Tibial artery (tissue), 4 donors: ENCODE measurements at regions of chr10 and their contacts with region 1.

Region 1: DNA sequence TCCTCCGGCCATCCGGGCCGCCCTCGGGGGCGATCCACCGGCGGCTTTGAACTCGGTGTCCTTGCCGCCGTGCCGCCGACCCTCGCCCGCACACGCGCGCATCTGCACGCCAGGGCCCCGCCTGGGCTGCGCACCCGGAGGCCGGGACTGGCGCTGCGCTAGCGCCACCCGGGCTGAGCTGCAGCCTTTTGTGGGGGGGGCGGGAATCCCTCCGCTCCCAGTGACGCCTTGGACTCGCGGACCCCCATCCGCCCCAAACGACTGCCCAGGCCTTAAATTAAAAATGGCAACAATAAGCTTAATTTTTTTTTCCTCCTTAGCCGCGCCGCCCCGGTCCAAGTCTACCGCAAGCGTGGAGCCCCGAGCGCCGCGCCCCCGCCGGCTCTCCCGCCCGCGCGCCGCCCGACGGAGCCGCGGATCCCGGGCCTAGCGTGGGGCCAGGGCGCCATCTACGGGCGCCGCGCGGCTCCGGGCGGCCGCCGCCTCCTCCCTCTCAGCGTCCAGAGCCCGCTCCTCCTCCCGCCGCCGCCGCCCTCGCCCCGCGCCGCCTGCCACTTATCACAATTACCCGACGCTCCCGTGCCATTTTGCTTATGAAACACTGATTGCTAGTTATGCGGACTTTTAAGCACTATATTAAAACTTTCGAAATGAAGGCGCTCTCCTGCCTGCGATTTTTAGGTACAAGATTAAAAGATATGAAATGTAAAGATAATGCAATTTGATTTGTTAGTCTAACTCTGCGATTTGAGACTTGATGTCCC is 7.5 kb upstream of the EBF3 start:
- DNase-seq: peak; percentile 55 to 69
- H3K4me3 ChIP-seq: peak overlapping the region; percentile 27 to 42
- H3K27ac ChIP-seq: no peak overlapping the region
- H3K4me1 ChIP-seq: peaks cover 0 to 55% (median 33%) of the 10 kb centered on the region in 4 donors
- H3K27me3 ChIP-seq: peaks cover 0 to 94% of the 10 kb centered on the region in 2 donors
- CTCF ChIP-seq: peak; percentile 43 to 59

Region 2: GRCh38 chr10:129030996-129031843 is 940.3 kb before region 1 on chr10:
- intact Hi-C with region 1: loop called (anchors 5 kb)
- DNase-seq: peak in 1 of 2 donors; percentile 46
- H3K4me3 ChIP-seq: no peak overlapping the region
- H3K27ac ChIP-seq: no peak overlapping the region
- H3K4me1 ChIP-seq: no peaks in the 10 kb centered on the region
- H3K27me3 ChIP-seq: peaks cover 0 to 48% of the 10 kb centered on the region in 2 donors
- CTCF ChIP-seq: peak; percentile 89 to 96

Region 3: GRCh38 chr10:129525401-129525801 is 446.2 kb before region 1 on chr10:
- intact Hi-C with region 1: no loop called
- DNase-seq: no peak
- H3K4me3 ChIP-seq: peak overlapping the region in 1 of 2 donors; percentile 14
- H3K27ac ChIP-seq: no peak overlapping the region
- H3K4me1 ChIP-seq: peaks cover 0 to 19% (median 10%) of the 10 kb centered on the region in 4 donors
- H3K27me3 ChIP-seq: no peaks in the 10 kb centered on the region
- CTCF ChIP-seq: no peak

Region 4: GRCh38 chr10:129728905-129729795 is 242.4 kb before region 1 on chr10:
- intact Hi-C with region 1: no loop called
- DNase-seq: peak in 1 of 2 donors; percentile 33
- H3K4me3 ChIP-seq: no peak overlapping the region
- H3K27ac ChIP-seq: no peak overlapping the region
- H3K4me1 ChIP-seq: no peaks in the 10 kb centered on the region
- H3K27me3 ChIP-seq: no peaks in the 10 kb centered on the region
- CTCF ChIP-seq: no peak

Region 5: DNA sequence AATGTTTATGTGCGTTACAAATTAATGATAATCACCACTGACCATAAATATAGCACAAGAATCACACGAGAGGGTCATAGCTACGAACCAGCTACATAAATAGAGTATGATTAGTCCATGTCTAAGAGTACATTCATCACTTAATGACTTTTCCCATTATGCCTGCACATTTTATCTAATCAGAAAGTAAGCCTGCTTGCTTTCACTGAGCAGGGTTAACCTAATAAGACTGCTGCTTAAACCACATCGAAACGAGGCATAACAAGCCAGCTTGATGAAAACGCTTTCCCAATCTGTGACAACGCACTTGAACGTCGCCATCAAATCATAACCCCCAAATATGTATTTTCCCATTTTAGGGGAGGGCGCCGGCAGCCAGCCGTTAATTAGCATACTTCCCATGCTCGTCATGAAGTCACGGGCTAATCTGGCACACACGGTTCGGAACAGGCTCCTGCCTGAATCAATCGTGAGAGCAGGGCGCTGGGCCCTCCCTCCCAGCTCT is 79.0 kb before region 1 on chr10:
- intact Hi-C with region 1: loop called (anchors 5 kb)
- DNase-seq: no peak
- H3K4me3 ChIP-seq: no peak overlapping the region
- H3K27ac ChIP-seq: no peak overlapping the region
- H3K4me1 ChIP-seq: no peaks in the 10 kb centered on the region
- H3K27me3 ChIP-seq: peaks cover 0 to 3% of the 10 kb centered on the region in 2 donors
- CTCF ChIP-seq: no peak

Region 6: DNA sequence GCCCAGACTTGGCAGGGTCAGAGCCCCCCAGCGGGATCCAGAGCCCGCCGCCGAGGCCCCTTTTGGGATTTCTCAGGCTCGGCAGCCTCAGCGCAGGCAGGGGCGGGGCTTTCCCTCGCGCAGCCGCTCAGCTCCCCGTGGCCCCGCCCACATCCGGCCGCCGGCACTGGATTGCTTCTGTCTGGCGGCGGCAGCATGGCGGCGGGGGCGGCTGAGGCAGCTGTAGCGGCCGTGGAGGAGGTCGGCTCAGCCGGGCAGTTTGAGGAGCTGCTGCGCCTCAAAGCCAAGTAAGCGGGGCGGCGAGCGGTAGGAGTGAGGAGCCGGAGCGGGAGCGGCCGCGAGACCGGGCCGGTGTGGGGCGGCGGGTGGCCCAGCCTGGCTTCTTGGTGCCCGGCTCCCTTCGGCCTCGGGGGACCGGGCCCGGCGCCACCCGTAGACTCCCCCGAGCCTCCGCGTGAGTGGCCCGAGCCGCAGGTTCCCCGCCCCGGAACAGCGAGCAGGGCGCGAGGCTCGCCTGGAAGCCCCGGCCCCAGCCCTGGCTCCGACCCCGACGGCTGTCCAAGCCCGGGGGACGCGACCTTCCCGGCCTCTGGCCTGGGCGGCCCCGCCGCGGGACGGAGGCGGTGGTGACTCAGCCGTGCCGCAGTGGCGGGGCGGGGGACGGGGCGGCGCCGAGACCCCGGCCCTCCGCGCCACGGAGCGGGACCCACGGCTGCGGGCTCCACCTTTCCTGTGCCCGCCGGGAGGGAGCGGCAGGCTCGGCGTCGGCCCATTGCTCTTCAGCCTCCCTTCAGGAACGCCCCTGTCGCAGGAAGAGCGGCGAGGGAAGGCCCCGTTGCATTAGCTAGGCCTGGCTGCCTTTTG is 164.9 kb after region 1 on chr10 and contains the start of gene GLRX3:
- intact Hi-C with region 1: loop called (anchors 10 kb)
- DNase-seq: peak; percentile 88 to 92
- H3K4me3 ChIP-seq: peak within 1 kb of the TSS; percentile 88 to 92
- H3K27ac ChIP-seq: peak within 1 kb of the TSS; percentile 76 to 84
- H3K4me1 ChIP-seq: peaks cover 0 to 46% (median 27%) of the 10 kb centered on the region in 4 donors
- H3K27me3 ChIP-seq: no peaks in the 10 kb centered on the region
- CTCF ChIP-seq: no peak

Region 7: GRCh38 chr10:130483691-130484466 is 512.3 kb after region 1 on chr10:
- intact Hi-C with region 1: no loop called
- DNase-seq: peak in 1 of 2 donors; percentile 28
- H3K4me3 ChIP-seq: no peak overlapping the region
- H3K27ac ChIP-seq: no peak overlapping the region
- H3K4me1 ChIP-seq: no peaks in the 10 kb centered on the region
- H3K27me3 ChIP-seq: peaks cover 0 to 4% of the 10 kb centered on the region in 2 donors
- CTCF ChIP-seq: no peak